ENCODE measurements at regions of chr1 and their contacts with region 1.

Region 1: DNA sequence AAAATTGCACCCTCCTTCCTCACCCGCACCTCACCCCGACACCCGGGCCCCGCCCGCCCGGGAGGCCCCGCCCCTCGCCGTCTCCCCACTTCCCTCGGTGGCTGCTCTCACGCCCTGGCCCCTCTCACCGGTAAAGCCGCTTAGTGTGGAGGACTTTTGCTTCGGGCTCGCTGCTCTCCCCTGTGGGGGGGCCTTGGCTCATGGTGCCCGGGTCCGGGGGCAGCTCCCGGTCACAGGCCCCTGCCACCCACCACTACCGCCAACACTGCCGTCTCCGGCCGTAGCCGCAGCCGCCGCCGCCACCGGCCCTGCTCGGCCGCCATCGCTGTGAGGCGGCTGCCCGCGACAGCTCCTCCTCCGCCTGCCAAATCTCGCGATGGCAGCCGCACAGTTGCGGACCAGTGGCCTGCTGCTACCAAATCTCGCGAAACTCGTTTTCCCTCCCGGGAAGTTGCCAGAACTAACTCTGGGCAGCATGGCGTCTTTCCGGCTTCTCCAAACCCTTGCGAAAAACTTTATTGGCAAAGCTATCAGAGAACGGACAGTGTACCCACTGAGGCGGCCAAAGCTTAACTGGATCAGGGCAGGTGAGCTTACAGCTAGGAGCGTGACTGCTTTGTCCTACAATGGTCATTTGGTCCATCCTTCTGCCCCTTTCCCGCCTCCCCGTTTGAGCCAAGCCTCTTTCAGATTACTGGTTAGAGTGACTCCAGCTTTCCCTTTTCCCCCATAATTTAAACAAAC is at the start of gene SMG5:
- DNase-seq: peak; percentile 89 to 99 (median 95)
- ATAC-seq: peak; percentile 91
- H3K4me3 ChIP-seq: peak within 1 kb of the TSS; percentile 62 to 80
- H3K4me3 Mint-ChIP-seq: peak within 1 kb of the TSS; percentile 93
- H3K27ac ChIP-seq: peak within 1 kb of the TSS; percentile 38 to 87
- H3K27ac Mint-ChIP-seq: peak within 1 kb of the TSS; percentile 91
- H3K4me1 ChIP-seq: peaks cover 28% of the 10 kb centered on the region
- H3K4me1 Mint-ChIP-seq: peaks cover 38% of the 10 kb centered on the region
- H3K27me3 ChIP-seq: no peaks in the 10 kb centered on the region
- H3K27me3 Mint-ChIP-seq: no peaks in the 10 kb centered on the region
- CTCF ChIP-seq: no peak
- total RNA-seq, gene SMG5: 68.9 to 70.2 TPM

Region 2: GRCh38 chr1:155084722-155085503 is 1197.7 kb before region 1 on chr1:
- CTCF ChIA-PET with region 1: no interaction called
- POLR2A ChIA-PET with region 1: no interaction called
- intact Hi-C with region 1: loop called in 1 of 2 experiments (anchors 2 kb)
- DNase-seq: peak; percentile 80 to 94 (median 92)
- ATAC-seq: peak; percentile 73
- H3K4me3 ChIP-seq: peak overlapping the region; percentile 82 to 92
- H3K4me3 Mint-ChIP-seq: peak overlapping the region; percentile 95
- H3K27ac ChIP-seq: peak overlapping the region; percentile 57 to 85
- H3K27ac Mint-ChIP-seq: peak overlapping the region; percentile 90
- H3K4me1 ChIP-seq: peaks cover 54% of the 10 kb centered on the region
- H3K4me1 Mint-ChIP-seq: peaks cover 39% of the 10 kb centered on the region
- H3K27me3 ChIP-seq: peaks cover 39 to 44% of the 10 kb centered on the region in 2 experiments
- H3K27me3 Mint-ChIP-seq: peaks cover 30% of the 10 kb centered on the region
- CTCF ChIP-seq: peak; percentile 84

Region 3: DNA sequence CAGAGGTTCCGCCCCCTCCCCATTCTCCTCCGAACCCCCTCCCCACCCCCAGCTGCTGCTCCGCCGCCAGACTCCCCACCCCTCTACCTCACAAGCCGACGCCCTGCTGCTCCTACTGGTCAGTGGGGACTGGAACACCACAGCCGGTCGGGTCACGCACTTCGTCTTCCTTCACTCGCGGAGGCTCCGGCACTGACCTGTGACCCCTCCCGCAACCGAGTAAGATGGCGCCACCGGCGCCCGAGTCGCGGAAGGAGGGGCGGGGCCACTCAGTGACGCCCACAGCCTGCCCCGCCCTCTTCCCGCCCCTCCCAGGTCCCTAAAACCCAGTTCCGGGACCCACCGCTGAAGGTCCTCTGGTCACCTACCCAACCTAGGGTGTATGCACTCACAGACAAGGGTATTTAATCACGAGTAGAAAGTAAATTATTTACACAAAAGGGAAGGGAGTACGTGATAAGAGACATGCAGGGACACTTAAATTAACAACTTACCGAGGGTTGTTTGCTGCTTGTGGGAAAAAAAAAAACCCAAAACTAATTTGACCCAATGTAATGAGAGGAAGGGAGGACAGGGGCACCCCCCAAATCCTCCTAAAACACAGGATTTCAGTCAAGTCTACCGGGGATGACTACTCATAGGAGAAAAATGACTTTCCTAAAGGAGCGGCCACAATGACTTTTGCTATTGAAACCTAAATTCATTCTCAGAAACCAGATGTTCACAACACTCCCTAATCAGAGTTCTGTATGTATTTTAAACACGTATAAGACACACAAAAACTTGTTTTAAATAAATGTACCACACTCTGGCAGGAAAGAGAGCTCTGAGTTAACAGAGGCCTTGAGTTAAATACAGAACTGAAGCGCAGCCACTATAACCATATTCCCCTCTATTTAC is 371.2 kb before region 1 on chr1 and contains the start of gene RIT1:
- CTCF ChIA-PET with region 1: no interaction called
- POLR2A ChIA-PET with region 1: no interaction called
- intact Hi-C with region 1: loop called in 1 of 2 experiments (anchors 5 kb)
- DNase-seq: peak; percentile 62 to 93 (median 85)
- ATAC-seq: peak; percentile 97
- H3K4me3 ChIP-seq: peak within 1 kb of the TSS; percentile 68 to 72
- H3K4me3 Mint-ChIP-seq: peak within 1 kb of the TSS; percentile 97
- H3K27ac ChIP-seq: peak within 1 kb of the TSS; percentile 71 to 73
- H3K27ac Mint-ChIP-seq: peak within 1 kb of the TSS; percentile 98
- H3K4me1 ChIP-seq: peaks cover 21% of the 10 kb centered on the region
- H3K4me1 Mint-ChIP-seq: peaks cover 27% of the 10 kb centered on the region
- H3K27me3 ChIP-seq: no peaks in the 10 kb centered on the region
- H3K27me3 Mint-ChIP-seq: no peaks in the 10 kb centered on the region
- CTCF ChIP-seq: no peak
- total RNA-seq, gene RIT1: 79.6 to 85.0 TPM

Region 4: GRCh38 chr1:156054500-156055280 is 228.0 kb before region 1 on chr1 and contains the start of gene LAMTOR2:
- CTCF ChIA-PET with region 1: no interaction called
- POLR2A ChIA-PET with region 1: no interaction called
- intact Hi-C with region 1: loop called (anchors 1 kb)
- DNase-seq: peak; percentile 90 to 98 (median 94)
- ATAC-seq: peak; percentile 78
- H3K4me3 ChIP-seq: peak within 1 kb of the TSS; percentile 85 to 96
- H3K4me3 Mint-ChIP-seq: peak within 1 kb of the TSS; percentile 92
- H3K27ac ChIP-seq: peak within 1 kb of the TSS; percentile 54 to 79
- H3K27ac Mint-ChIP-seq: peak within 1 kb of the TSS; percentile 84
- H3K4me1 ChIP-seq: peaks cover 11% of the 10 kb centered on the region
- H3K4me1 Mint-ChIP-seq: peaks cover 31% of the 10 kb centered on the region
- H3K27me3 ChIP-seq: no peaks in the 10 kb centered on the region
- H3K27me3 Mint-ChIP-seq: no peaks in the 10 kb centered on the region
- CTCF ChIP-seq: no peak
- total RNA-seq, gene LAMTOR2: 6.7 to 8.3 TPM

Region 5: DNA sequence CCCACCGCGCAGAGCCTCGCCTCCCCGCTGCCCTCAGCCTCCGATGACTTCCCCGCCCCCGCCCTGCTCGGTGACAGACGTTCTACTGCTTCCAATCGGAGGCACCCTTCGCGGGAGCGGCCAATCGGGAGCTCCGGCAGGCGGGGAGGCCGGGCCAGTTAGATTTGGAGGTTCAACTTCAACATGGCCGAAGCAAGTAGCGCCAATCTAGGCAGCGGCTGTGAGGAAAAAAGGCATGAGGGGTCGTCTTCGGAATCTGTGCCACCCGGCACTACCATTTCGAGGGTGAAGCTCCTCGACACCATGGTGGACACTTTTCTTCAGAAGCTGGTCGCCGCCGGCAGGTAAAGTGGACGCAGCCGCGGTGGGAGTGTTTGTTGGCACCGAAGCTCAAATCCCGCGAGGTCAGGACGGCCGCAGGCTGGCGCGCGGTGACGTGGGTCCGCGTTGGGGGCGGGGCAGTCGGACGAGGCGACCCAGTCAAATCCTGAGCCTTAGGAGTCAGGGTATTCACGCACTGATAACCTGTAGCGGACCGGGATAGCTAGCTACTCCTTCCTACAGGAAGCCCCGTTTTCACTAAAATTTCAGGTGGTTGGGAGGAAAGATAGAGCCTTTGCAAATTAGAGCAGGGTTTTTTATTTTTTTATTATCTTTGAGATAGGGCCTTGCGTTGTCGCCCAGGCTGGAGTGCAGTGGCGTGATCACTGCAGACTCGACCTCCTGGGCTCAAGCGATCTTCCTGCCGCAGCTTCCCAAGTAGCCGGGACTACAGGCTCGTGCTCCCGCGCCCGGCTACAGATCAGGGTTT is 69.6 kb before region 1 on chr1 and contains the start of gene PMF1:
- CTCF ChIA-PET with region 1: no interaction called
- POLR2A ChIA-PET with region 1: interaction called, 18 read pairs
- intact Hi-C with region 1: loop called (anchors 1 to 5 kb)
- DNase-seq: peak; percentile 89 to 97 (median 95)
- ATAC-seq: peak; percentile 95
- H3K4me3 ChIP-seq: peak within 1 kb of the TSS; percentile 70 to 79
- H3K4me3 Mint-ChIP-seq: peak within 1 kb of the TSS; percentile 97
- H3K27ac ChIP-seq: peak within 1 kb of the TSS; percentile 92 to 95
- H3K27ac Mint-ChIP-seq: peak within 1 kb of the TSS; percentile 99
- H3K4me1 ChIP-seq: peaks cover 24% of the 10 kb centered on the region
- H3K4me1 Mint-ChIP-seq: peaks cover 31% of the 10 kb centered on the region
- H3K27me3 ChIP-seq: no peaks in the 10 kb centered on the region
- H3K27me3 Mint-ChIP-seq: no peaks in the 10 kb centered on the region
- CTCF ChIP-seq: no peak
- total RNA-seq, gene PMF1: 72.1 to 74.4 TPM

Region 6: DNA sequence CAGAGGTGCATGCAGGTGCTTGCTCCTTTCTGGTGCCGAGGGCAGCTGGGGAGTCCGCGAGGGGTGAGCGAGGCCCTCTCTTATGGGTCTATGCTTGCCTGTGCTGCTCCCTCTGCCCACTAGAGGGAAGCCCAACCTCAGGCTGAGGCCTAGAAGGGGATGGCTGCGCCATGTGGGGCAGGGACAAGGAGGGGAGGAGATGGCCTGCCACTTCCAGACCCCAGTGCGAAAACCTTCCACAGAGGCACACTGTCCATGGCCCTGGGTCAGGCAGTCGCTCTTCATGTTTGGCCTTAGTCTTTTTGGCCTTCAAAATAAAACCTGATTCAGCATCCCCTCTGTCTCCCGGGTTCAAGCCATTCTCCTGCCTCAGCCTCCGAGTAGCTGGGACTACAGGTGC is 100.4 kb after region 1 on chr1:
- CTCF ChIA-PET with region 1: no interaction called
- POLR2A ChIA-PET with region 1: no interaction called
- intact Hi-C with region 1: no loop called
- DNase-seq: peak; percentile 21 to 73 (median 64)
- ATAC-seq: peak; percentile 82
- H3K4me3 ChIP-seq: no peak overlapping the region
- H3K4me3 Mint-ChIP-seq: no peak overlapping the region
- H3K27ac ChIP-seq: no peak overlapping the region
- H3K27ac Mint-ChIP-seq: no peak overlapping the region
- H3K4me1 ChIP-seq: peaks cover 6% of the 10 kb centered on the region
- H3K4me1 Mint-ChIP-seq: peaks cover 7% of the 10 kb centered on the region
- H3K27me3 ChIP-seq: peaks cover 0 to 3% of the 10 kb centered on the region in 2 experiments
- H3K27me3 Mint-ChIP-seq: peaks cover 9% of the 10 kb centered on the region
- CTCF ChIP-seq: peak; percentile 61

Region 7: GRCh38 chr1:156456622-156457465 is 174.2 kb after region 1 on chr1:
- CTCF ChIA-PET with region 1: no interaction called
- POLR2A ChIA-PET with region 1: no interaction called
- intact Hi-C with region 1: loop called in 1 of 2 experiments (anchors 2 kb)
- DNase-seq: peak; percentile 92 to 99 (median 96)
- ATAC-seq: peak; percentile 84
- H3K4me3 ChIP-seq: peak overlapping the region; percentile 57 to 62
- H3K4me3 Mint-ChIP-seq: peak overlapping the region; percentile 93
- H3K27ac ChIP-seq: peak overlapping the region; percentile 83 to 89
- H3K27ac Mint-ChIP-seq: peak overlapping the region; percentile 100
- H3K4me1 ChIP-seq: peaks cover 4% of the 10 kb centered on the region
- H3K4me1 Mint-ChIP-seq: peaks cover 17% of the 10 kb centered on the region
- H3K27me3 ChIP-seq: no peaks in the 10 kb centered on the region
- H3K27me3 Mint-ChIP-seq: no peaks in the 10 kb centered on the region
- CTCF ChIP-seq: no peak

Region 8: GRCh38 chr1:156740679-156741612 is 458.3 kb after region 1 on chr1 and contains the start of gene MRPL24:
- CTCF ChIA-PET with region 1: no interaction called
- POLR2A ChIA-PET with region 1: no interaction called
- intact Hi-C with region 1: loop called in 1 of 2 experiments (anchors 1 kb)
- DNase-seq: peak; percentile 88 to 100 (median 96)
- ATAC-seq: peak; percentile 88
- H3K4me3 ChIP-seq: peak within 1 kb of the TSS; percentile 60 to 68
- H3K4me3 Mint-ChIP-seq: peak within 1 kb of the TSS; percentile 97
- H3K27ac ChIP-seq: peak within 1 kb of the TSS; percentile 55 to 81
- H3K27ac Mint-ChIP-seq: peak within 1 kb of the TSS; percentile 98
- H3K4me1 ChIP-seq: peaks cover 13% of the 10 kb centered on the region
- H3K4me1 Mint-ChIP-seq: peaks cover 38% of the 10 kb centered on the region
- H3K27me3 ChIP-seq: no peaks in the 10 kb centered on the region
- H3K27me3 Mint-ChIP-seq: no peaks in the 10 kb centered on the region
- CTCF ChIP-seq: no peak
- total RNA-seq, gene MRPL24: 9.1 to 12.5 TPM